ENCODE measurements at regions of chr3 and their contacts with region 1.

Region 1: GRCh38 chr3:105385819-105386508 is 19.3 kb downstream of the ALCAM start:
- DNase-seq: no peak
- ATAC-seq: no peak
- H3K4me3 ChIP-seq: no peak overlapping the region
- H3K27ac ChIP-seq: peak overlapping the region; percentile 71
- H3K4me1 ChIP-seq: peaks cover 38% of the 10 kb centered on the region
- H3K27me3 ChIP-seq: no peaks in the 10 kb centered on the region
- CTCF ChIP-seq: no peak
- EP300 ChIP-seq: no peak
- POLR2A ChIP-seq: no peak
- RAD21 ChIP-seq: no peak

Region 2: GRCh38 chr3:105315151-105315550 is 70.8 kb before region 1 on chr3:
- CTCF ChIA-PET with region 1: no interaction called
- POLR2A ChIA-PET with region 1: no interaction called
- in situ Hi-C with region 1: no loop called
- intact Hi-C with region 1: no loop called
- DNase-seq: no peak
- ATAC-seq: no peak
- H3K4me3 ChIP-seq: no peak overlapping the region
- H3K27ac ChIP-seq: no peak overlapping the region
- H3K4me1 ChIP-seq: no peaks in the 10 kb centered on the region
- H3K27me3 ChIP-seq: no peaks in the 10 kb centered on the region
- CTCF ChIP-seq: no peak
- EP300 ChIP-seq: no peak
- POLR2A ChIP-seq: no peak
- RAD21 ChIP-seq: no peak

Region 3: GRCh38 chr3:105429034-105429762 is 43.2 kb after region 1 on chr3:
- CTCF ChIA-PET with region 1: no interaction called
- POLR2A ChIA-PET with region 1: no interaction called
- in situ Hi-C with region 1: no loop called
- intact Hi-C with region 1: loop called (anchors 5 kb)
- DNase-seq: peak; percentile 5
- ATAC-seq: no peak
- H3K4me3 ChIP-seq: no peak overlapping the region
- H3K27ac ChIP-seq: peak overlapping the region; percentile 24
- H3K4me1 ChIP-seq: peaks cover 28% of the 10 kb centered on the region
- H3K27me3 ChIP-seq: no peaks in the 10 kb centered on the region
- CTCF ChIP-seq: no peak
- EP300 ChIP-seq: no peak
- POLR2A ChIP-seq: no peak
- RAD21 ChIP-seq: no peak